Ascending aorta (tissue), 2 donors: ENCODE measurements at regions of chr2 and their contacts with region 1.

Region 1: GRCh38 chr2:175709248-175709647 is 292.8 kb downstream of the LNPK start:
- DNase-seq: no peak
- H3K4me3 ChIP-seq: no peak overlapping the region
- H3K27ac ChIP-seq: no peak overlapping the region
- H3K4me1 ChIP-seq: no peaks in the 10 kb centered on the region
- H3K27me3 ChIP-seq: no peaks in the 10 kb centered on the region
- CTCF ChIP-seq: no peak

Region 2: DNA sequence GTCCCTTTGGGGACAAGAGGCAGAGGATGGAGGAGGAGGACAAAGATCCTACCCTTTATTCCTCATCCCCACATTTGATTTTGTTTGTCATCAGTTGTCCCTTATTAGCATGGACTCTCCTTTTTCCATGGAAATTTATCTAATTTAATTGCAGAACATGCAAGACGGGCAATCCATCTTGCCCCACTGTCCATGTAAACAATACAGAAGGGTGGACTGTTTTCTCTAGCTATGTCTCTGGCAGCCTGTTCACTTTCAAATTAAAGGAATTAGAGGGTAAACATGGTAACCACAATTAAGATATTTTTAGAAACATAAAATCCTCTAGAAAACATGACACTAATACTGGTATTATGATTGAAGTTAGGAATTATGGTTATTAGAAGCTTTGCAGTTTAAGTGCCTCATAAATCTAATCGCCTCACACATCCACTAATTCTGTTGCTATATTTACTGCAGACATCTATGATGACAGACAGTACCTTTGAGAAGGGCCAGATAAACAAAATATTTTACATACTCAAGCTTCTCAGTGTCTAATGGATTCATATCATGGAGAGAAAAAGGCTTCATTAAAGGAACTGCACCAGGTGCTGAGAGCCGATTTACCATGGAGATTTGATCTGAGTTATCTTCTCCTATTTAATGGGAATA is 77.3 kb after region 1 on chr2:
- intact Hi-C with region 1: loop called (anchors 2 kb)
- DNase-seq: no peak
- H3K4me3 ChIP-seq: no peak overlapping the region
- H3K27ac ChIP-seq: no peak overlapping the region
- H3K4me1 ChIP-seq: no peaks in the 10 kb centered on the region
- H3K27me3 ChIP-seq: no peaks in the 10 kb centered on the region
- CTCF ChIP-seq: no peak

Region 3: DNA sequence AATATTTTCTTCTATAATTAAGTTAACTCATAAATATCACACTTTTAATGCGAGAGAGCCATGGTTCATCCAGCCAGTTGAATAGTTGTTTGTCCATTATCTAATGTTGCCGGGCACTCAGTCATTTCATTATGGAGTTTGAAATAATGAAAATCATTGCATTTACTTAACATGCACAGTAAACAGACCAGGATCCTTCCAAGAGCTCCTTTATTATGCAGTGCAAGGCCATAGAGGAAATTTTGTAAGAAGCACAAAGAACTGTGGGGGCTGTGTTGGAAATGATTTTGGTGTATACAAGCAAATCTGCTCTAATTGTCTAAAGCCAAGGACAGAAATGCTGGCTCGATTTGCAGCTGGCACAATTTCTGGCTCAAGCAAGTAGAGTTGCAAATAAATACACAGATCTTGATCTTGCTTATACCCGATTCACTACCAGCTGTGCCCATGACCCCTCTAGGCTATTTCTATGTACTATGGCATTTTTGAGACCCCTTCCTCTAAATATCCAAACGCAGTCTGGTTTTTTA is 1103.1 kb after region 1 on chr2:
- intact Hi-C with region 1: no loop called
- DNase-seq: no peak
- H3K4me3 ChIP-seq: no peak overlapping the region
- H3K27ac ChIP-seq: no peak overlapping the region
- H3K4me1 ChIP-seq: peaks cover 0 to 9% of the 10 kb centered on the region in 2 donors
- H3K27me3 ChIP-seq: no peaks in the 10 kb centered on the region
- CTCF ChIP-seq: no peak